ENCODE measurements at regions of chr6 and their contacts with region 1.

Region 1: GRCh38 chr6:155274533-155274932 is 10.7 kb downstream of the CLDN20 start:
- DNase-seq: no peak
- H3K4me3 ChIP-seq: no peak overlapping the region
- H3K27ac ChIP-seq: no peak overlapping the region
- H3K4me1 ChIP-seq: peaks cover 0 to 4% (median 3%) of the 10 kb centered on the region in 4 experiments; a peak in 3 of 7 replicates
- H3K27me3 ChIP-seq: no peaks in the 10 kb centered on the region
- CTCF ChIP-seq: no peak
- EP300 ChIP-seq: no peak
- POLR2A ChIP-seq: no peak
- RAD21 ChIP-seq: no peak

Region 2: GRCh38 chr6:155259204-155259603 is 15.3 kb before region 1 on chr6:
- CTCF ChIA-PET with region 1: interaction called, 10 read pairs
- POLR2A ChIA-PET with region 1: no interaction called
- DNase-seq: no peak
- H3K4me3 ChIP-seq: no peak overlapping the region
- H3K27ac ChIP-seq: no peak overlapping the region
- H3K4me1 ChIP-seq: peaks cover 2 to 8% (median 3%) of the 10 kb centered on the region in 4 experiments; a peak in 3 of 7 replicates
- H3K27me3 ChIP-seq: no peaks in the 10 kb centered on the region
- CTCF ChIP-seq: no peak
- EP300 ChIP-seq: no peak
- POLR2A ChIP-seq: no peak
- RAD21 ChIP-seq: no peak

Region 3: DNA sequence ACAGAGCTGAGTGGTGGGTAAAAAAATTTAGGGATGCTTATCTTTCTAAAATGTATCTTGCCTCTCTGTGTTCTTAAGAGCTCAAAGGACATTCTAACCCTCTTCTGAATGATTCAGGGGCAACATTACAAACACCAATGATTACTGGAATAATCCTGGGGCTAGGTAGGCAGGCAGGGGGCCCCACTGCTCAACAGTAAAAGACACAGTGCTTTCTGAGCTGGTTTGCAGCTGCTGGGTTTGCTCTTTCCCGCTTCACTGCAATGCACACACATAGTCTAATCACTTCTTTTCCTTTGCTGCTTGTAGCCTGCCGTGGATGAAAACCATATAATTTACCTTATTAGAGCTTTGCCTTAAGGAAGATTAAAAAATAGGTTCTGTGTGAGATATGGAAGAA is 13.2 kb after region 1 on chr6:
- CTCF ChIA-PET with region 1: interaction called, 15 read pairs
- POLR2A ChIA-PET with region 1: interaction called, 3 read pairs
- DNase-seq: no peak
- H3K4me3 ChIP-seq: no peak overlapping the region
- H3K27ac ChIP-seq: no peak overlapping the region
- H3K4me1 ChIP-seq: no peaks in the 10 kb centered on the region; a peak in 1 of 7 replicates
- H3K27me3 ChIP-seq: no peaks in the 10 kb centered on the region
- CTCF ChIP-seq: no peak
- EP300 ChIP-seq: no peak
- POLR2A ChIP-seq: no peak
- RAD21 ChIP-seq: 0 out of 4 replicates have a peak, but pooled peaks of 1 of the 2 experiments have one; percentile 19